B cell (primary cell): ENCODE measurements at regions of chr15 and their contacts with region 1.

Region 1: DNA sequence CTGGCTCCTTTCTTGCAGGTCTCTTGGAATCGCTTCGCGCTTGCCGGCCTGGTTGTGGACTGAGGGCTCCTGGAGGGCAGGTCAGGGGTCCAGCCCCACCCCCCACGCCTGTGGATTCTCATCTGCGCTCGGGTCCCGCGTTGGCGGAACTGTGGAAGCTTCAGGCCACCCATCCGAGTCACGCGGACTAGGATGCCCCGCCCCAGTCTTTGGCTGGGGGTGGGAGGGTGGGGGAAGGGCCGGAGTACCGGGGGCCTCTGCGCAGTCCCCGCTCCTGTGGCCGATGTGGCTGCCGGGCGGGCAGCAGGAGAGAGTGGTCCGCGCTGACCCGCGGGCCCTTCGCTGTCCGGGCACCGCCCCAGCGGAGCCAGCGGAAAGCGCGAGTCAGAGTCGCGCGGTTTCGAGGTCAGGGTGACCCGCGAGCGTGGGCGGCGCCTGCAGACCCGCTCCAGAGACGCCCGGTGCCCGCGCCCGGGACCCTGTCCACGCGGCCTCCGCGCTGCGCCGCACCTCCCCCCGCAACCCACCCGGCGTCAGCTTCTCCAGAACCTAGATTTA is 114.2 kb downstream of the KLF13 start:
- DNase-seq: peak; percentile 46
- ATAC-seq: peak; percentile 37
- H3K4me3 ChIP-seq: peak overlapping the region in 4 of 5 experiments; percentile 50 to 68 (median 64)
- H3K4me3 Mint-ChIP-seq: peak overlapping the region; percentile 71
- H3K27ac ChIP-seq: peak overlapping the region; percentile 15 to 68
- H3K27ac Mint-ChIP-seq: no peak overlapping the region
- H3K4me1 ChIP-seq: peaks cover 33 to 52% of the 10 kb centered on the region in 2 donors
- H3K4me1 Mint-ChIP-seq: peaks cover 59% of the 10 kb centered on the region
- H3K27me3 ChIP-seq: no peaks in the 10 kb centered on the region
- H3K27me3 Mint-ChIP-seq: no peaks in the 10 kb centered on the region
- CTCF ChIP-seq: no peak

Region 2: GRCh38 chr15:30827625-30828288 is 613.1 kb before region 1 on chr15:
- CTCF ChIA-PET with region 1: no interaction called
- POLR2A ChIA-PET with region 1: no interaction called
- intact Hi-C with region 1: no loop called
- DNase-seq: no peak
- ATAC-seq: no peak
- H3K4me3 ChIP-seq: no peak overlapping the region
- H3K4me3 Mint-ChIP-seq: no peak overlapping the region
- H3K27ac ChIP-seq: no peak overlapping the region
- H3K27ac Mint-ChIP-seq: no peak overlapping the region
- H3K4me1 ChIP-seq: peaks cover 3 to 11% of the 10 kb centered on the region in 2 donors
- H3K4me1 Mint-ChIP-seq: peaks cover 15% of the 10 kb centered on the region
- H3K27me3 ChIP-seq: no peaks in the 10 kb centered on the region
- H3K27me3 Mint-ChIP-seq: no peaks in the 10 kb centered on the region
- CTCF ChIP-seq: no peak

Region 3: GRCh38 chr15:31200735-31201151 is 240.1 kb before region 1 on chr15:
- CTCF ChIA-PET with region 1: interaction called, 16 read pairs
- POLR2A ChIA-PET with region 1: no interaction called
- intact Hi-C with region 1: no loop called
- DNase-seq: peak; percentile 63
- ATAC-seq: peak; percentile 69
- H3K4me3 ChIP-seq: no peak overlapping the region
- H3K4me3 Mint-ChIP-seq: no peak overlapping the region
- H3K27ac ChIP-seq: no peak overlapping the region
- H3K27ac Mint-ChIP-seq: no peak overlapping the region
- H3K4me1 ChIP-seq: peaks cover 0 to 4% of the 10 kb centered on the region in 2 donors
- H3K4me1 Mint-ChIP-seq: peaks cover 8% of the 10 kb centered on the region
- H3K27me3 ChIP-seq: peaks cover 0 to 4% (median 2%) of the 10 kb centered on the region in 4 experiments
- H3K27me3 Mint-ChIP-seq: peaks cover 5% of the 10 kb centered on the region
- CTCF ChIP-seq: peak; percentile 26

Region 4: GRCh38 chr15:31458591-31459399 is 18.0 kb after region 1 on chr15:
- CTCF ChIA-PET with region 1: interaction called, 32 read pairs
- POLR2A ChIA-PET with region 1: interaction called, 4 read pairs
- intact Hi-C with region 1: no loop called
- DNase-seq: peak; percentile 80
- ATAC-seq: peak; percentile 96
- H3K4me3 ChIP-seq: peak overlapping the region in 3 of 5 experiments; percentile 12 to 37 (median 34)
- H3K4me3 Mint-ChIP-seq: peak overlapping the region; percentile 85
- H3K27ac ChIP-seq: peak overlapping the region; percentile 34 to 47
- H3K27ac Mint-ChIP-seq: peak overlapping the region; percentile 87
- H3K4me1 ChIP-seq: peaks cover 40 to 48% of the 10 kb centered on the region in 2 donors
- H3K4me1 Mint-ChIP-seq: peaks cover 44% of the 10 kb centered on the region
- H3K27me3 ChIP-seq: peaks cover 0 to 3% (median 0%) of the 10 kb centered on the region in 4 experiments
- H3K27me3 Mint-ChIP-seq: peaks cover 4% of the 10 kb centered on the region
- CTCF ChIP-seq: no peak

Region 5: DNA sequence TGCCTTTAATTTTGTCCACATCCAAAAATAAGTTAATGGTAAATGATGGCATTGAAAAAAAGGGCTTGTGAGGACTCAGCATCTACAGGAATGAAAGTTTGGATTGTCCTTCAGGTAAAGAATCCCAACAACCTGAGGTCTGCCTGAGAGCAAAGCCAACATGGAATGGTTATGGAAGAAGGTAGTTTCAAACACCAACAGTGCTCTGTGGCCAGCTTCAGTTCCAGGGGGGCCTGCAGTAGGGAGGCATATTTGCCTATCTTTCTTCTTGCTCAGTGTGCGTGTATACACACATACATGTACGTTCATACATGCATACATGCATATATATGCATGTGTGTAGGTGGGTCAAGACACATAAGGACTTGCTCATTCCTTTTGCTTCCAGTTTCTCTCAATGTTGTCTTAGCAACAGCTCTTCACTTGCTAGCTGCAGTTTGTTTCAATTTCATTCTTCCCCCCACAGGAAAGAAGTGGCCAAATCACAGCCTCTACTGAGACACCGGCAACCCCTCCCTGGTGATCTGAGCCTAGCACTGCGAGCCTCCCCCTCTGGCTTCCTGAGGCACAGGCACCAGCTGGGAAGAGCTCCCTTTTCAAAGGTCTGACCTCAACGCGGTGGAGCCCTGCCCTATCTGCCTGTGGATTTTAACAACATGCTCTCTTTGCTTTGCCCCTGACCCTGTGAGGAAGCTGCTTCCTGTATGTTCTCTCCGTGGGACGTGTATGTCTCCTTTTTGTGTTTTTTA is 32.0 kb after region 1 on chr15:
- CTCF ChIA-PET with region 1: interaction called, 32 read pairs
- POLR2A ChIA-PET with region 1: interaction called, 6 read pairs
- intact Hi-C with region 1: loop called (anchors 5 kb)
- DNase-seq: peak; percentile 79
- ATAC-seq: peak; percentile 88
- H3K4me3 ChIP-seq: peak overlapping the region in 4 of 5 experiments; percentile 37 to 61 (median 55)
- H3K4me3 Mint-ChIP-seq: peak overlapping the region; percentile 85
- H3K27ac ChIP-seq: peak overlapping the region; percentile 86 to 88
- H3K27ac Mint-ChIP-seq: peak overlapping the region; percentile 92
- H3K4me1 ChIP-seq: peaks cover 30 to 41% of the 10 kb centered on the region in 2 donors
- H3K4me1 Mint-ChIP-seq: peaks cover 51% of the 10 kb centered on the region
- H3K27me3 ChIP-seq: no peaks in the 10 kb centered on the region
- H3K27me3 Mint-ChIP-seq: no peaks in the 10 kb centered on the region
- CTCF ChIP-seq: no peak

Region 6: GRCh38 chr15:31494786-31495185 is 54.0 kb after region 1 on chr15:
- CTCF ChIA-PET with region 1: interaction called, 326 read pairs
- POLR2A ChIA-PET with region 1: no interaction called
- intact Hi-C with region 1: no loop called
- DNase-seq: no peak
- ATAC-seq: no peak
- H3K4me3 ChIP-seq: no peak overlapping the region
- H3K4me3 Mint-ChIP-seq: no peak overlapping the region
- H3K27ac ChIP-seq: no peak overlapping the region
- H3K27ac Mint-ChIP-seq: no peak overlapping the region
- H3K4me1 ChIP-seq: peaks cover 0 to 6% of the 10 kb centered on the region in 2 donors
- H3K4me1 Mint-ChIP-seq: peaks cover 2% of the 10 kb centered on the region
- H3K27me3 ChIP-seq: no peaks in the 10 kb centered on the region
- H3K27me3 Mint-ChIP-seq: no peaks in the 10 kb centered on the region
- CTCF ChIP-seq: no peak